ENCODE measurements at regions of chr1 and their contacts with region 1.

Region 1: GRCh38 chr1:198088360-198089071 is 68.3 kb upstream of the NEK7 start:
- DNase-seq: peak; percentile 26
- H3K4me3 Mint-ChIP-seq: no peak overlapping the region
- H3K27ac Mint-ChIP-seq: no peak overlapping the region
- H3K4me1 Mint-ChIP-seq: peaks cover 7% of the 10 kb centered on the region
- H3K27me3 Mint-ChIP-seq: no peaks in the 10 kb centered on the region

Region 2: DNA sequence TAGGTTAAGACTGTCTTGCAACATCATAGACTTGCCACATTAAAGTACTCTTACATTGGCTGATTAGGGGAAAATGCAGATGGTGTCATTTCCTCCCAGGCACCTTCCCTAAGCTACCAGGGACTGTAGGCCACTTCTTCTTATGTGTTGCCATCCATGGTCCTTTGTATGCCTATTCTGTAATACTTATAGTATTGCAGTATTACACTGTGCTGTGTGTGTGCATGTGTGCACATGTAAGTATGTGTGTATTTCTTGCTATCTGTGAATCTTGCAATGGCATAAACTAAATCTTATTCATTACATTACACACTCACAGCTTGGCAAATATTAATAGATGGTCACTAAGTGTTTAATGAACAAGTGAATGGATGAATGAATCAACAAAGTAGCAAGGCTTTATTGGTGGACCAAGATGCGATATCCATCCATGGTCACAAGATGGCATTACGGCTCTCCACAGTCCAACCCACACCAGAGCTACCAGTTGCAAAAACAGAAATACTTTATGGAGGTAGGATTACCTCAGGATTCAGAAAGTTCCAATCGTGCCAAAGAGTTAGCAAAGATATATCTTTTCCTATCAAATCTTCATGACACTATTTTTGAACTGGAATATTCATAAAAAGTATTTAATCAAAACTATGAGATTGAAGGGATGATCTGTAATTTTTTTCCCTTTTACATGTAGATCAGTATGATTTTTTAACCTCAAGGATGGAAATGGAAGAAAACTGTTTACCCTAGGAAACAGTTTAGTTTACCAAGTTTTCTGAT is 473.4 kb before region 1 on chr1:
- CTCF ChIA-PET with region 1: no interaction called
- intact Hi-C with region 1: loop called (anchors 10 kb)
- DNase-seq: peak; percentile 49
- H3K4me3 Mint-ChIP-seq: no peak overlapping the region
- H3K27ac Mint-ChIP-seq: no peak overlapping the region
- H3K4me1 Mint-ChIP-seq: no peaks in the 10 kb centered on the region
- H3K27me3 Mint-ChIP-seq: no peaks in the 10 kb centered on the region

Region 3: GRCh38 chr1:198001776-198002408 is 86.6 kb before region 1 on chr1:
- CTCF ChIA-PET with region 1: no interaction called
- intact Hi-C with region 1: no loop called
- DNase-seq: no peak
- H3K4me3 Mint-ChIP-seq: no peak overlapping the region
- H3K27ac Mint-ChIP-seq: no peak overlapping the region
- H3K4me1 Mint-ChIP-seq: no peaks in the 10 kb centered on the region
- H3K27me3 Mint-ChIP-seq: peaks cover 3% of the 10 kb centered on the region

Region 4: DNA sequence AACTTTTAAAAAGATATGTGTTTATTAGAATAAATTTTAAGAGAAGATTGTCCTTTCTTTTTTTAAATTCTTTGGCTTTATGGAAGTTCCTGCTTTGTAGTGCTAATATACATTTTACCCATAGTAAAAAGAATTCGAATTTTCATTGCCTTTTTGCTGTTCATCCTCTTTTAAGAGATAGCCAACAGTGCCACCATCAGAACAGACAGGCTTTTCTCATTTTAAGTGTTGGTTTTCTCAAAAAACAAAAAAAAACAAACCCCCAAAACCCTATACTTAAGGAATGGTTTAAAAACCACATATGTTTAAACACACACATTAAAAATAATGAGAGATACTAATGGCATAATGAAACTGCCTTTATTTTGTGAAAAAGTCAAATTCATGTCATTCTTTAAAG is 187.1 kb after region 1 on chr1:
- CTCF ChIA-PET with region 1: no interaction called
- intact Hi-C with region 1: loop called (anchors 1 kb)
- DNase-seq: no peak
- H3K4me3 Mint-ChIP-seq: no peak overlapping the region
- H3K27ac Mint-ChIP-seq: no peak overlapping the region
- H3K4me1 Mint-ChIP-seq: peaks cover 5% of the 10 kb centered on the region
- H3K27me3 Mint-ChIP-seq: no peaks in the 10 kb centered on the region

Region 5: DNA sequence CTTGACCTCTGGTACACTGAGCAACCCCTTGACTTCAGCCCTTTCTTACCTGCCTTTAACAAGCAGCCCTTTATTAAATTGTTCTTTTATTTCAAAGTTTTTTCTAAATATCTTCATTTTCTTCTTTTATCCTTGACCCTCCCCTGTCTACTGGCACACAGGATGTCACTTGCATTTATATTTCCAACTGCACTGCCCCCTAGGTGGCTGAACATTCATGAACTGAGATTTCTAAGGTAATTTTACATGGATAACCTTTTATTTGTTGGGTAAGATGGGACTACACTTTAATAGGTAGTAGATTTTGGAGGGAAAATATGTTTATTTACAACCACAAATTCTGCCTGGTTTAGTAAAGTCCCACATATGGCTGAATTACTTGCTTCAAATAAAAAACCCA is 261.9 kb after region 1 on chr1:
- CTCF ChIA-PET with region 1: no interaction called
- intact Hi-C with region 1: loop called (anchors 2 kb)
- DNase-seq: peak; percentile 20
- H3K4me3 Mint-ChIP-seq: no peak overlapping the region
- H3K27ac Mint-ChIP-seq: no peak overlapping the region
- H3K4me1 Mint-ChIP-seq: peaks cover 3% of the 10 kb centered on the region
- H3K27me3 Mint-ChIP-seq: no peaks in the 10 kb centered on the region

Region 6: GRCh38 chr1:198359024-198359653 is 270.6 kb after region 1 on chr1:
- CTCF ChIA-PET with region 1: interaction called, 4 read pairs
- intact Hi-C with region 1: loop called (anchors 1 kb)
- DNase-seq: no peak
- H3K4me3 Mint-ChIP-seq: no peak overlapping the region
- H3K27ac Mint-ChIP-seq: no peak overlapping the region
- H3K4me1 Mint-ChIP-seq: no peaks in the 10 kb centered on the region
- H3K27me3 Mint-ChIP-seq: no peaks in the 10 kb centered on the region

Region 7: GRCh38 chr1:198534548-198535418 is 446.3 kb after region 1 on chr1:
- CTCF ChIA-PET with region 1: no interaction called
- intact Hi-C with region 1: no loop called
- DNase-seq: no peak
- H3K4me3 Mint-ChIP-seq: peak overlapping the region; percentile 62
- H3K27ac Mint-ChIP-seq: peak overlapping the region; percentile 78
- H3K4me1 Mint-ChIP-seq: peaks cover 82% of the 10 kb centered on the region
- H3K27me3 Mint-ChIP-seq: no peaks in the 10 kb centered on the region

Measured in activated naive CD4-positive, alpha-beta T cell treated with anti-CD3 and anti-CD28 coated beads for 36 hours (primary cell).